Posterior cingulate gyrus (tissue), 11 donors: ENCODE measurements at regions of chr1 and their contacts with region 1.

Region 1: DNA sequence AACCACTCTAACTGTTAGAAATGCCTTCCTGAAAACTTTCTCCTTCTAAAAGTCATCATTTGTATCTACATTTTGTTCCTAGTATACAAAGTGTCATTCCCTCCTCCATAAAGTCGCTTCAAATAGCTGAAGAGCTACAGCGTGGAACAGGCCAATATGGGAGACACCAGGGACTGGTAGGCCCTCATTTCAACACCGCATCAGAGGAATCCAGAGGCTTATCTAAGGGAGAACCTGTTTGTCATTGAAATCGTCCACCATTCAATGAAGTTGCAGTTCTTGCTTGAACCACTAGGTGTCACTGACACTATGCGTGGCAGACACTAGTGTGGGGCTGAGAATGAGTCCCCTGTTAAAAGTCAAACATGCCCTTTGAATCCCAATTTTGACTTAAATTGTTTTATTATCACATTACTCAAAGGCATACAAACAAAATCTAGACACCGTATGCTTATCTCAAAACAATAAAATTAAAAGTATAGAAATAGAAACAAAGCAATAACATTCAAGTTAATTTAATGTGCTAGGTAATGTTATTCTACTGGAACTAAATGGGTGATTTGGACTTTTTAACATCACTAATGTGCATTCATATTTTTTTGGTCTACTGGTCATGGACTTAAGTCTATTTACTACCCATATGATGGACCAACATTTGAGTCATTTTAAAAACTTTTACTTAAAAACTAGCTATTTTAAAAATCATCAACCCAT is 182.3 kb downstream of the FCRL5 start:
- DNase-seq: peak in 4 of 10 donors; percentile 12 to 31 (median 20)

Region 2: DNA sequence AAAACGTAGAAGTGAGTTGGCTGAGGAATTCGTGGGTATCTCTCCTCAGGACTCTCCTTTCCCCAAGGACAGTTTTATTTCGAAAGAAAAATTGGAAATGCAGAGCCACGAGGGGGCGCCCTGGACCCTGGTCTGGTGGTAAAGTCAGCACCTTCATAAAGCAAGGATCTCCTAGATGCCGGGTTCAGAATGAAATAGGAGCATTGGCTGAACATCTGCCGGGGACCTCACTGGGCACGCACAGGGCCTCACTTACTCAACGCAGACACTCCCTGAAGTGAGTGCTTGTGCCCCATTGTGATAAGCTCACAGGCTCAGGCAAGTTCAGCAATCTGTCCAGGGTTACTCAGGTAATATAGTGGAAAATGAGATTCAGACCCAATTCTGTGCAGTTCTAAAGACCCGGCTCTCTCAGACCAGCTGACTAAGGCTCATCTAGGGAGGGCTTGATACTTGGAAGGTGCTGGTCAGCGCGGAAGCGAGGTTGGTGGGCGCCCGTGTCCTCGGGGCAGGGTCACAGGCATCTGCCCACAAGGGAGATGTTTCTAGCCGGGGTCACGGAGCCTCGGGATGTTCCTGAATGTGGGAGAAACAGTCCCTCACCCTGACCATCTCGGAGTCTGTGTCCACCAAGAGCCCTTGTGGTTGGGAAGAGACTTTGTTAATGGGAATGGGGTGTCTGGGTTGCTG is 176.1 kb before region 1 on chr1:
- intact Hi-C with region 1: loop called (anchors 10 kb)
- DNase-seq: peak in 9 of 10 donors; percentile 37 to 92 (median 68)

Region 3: GRCh38 chr1:157274698-157275534 is 95.0 kb before region 1 on chr1:
- intact Hi-C with region 1: no loop called
- DNase-seq: no peak

Region 4: DNA sequence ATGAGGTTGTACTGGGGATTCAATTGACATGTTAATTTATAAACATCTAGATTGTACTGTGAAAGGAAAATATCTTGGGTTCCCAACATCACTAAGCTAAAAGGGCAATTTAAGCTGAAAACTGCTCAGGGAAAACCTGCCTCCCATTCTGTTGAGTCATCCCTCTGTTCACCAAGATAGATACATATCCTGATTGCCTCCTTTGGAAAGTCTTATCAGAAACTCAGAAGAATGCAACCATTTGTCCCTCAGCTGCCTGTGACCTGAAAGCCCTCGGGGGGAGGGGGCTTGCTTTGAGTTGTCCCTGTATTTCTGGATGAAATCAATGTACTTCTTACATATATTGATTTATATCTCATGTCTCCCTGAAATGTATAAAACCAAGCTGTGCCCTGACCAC is 44.7 kb before region 1 on chr1:
- intact Hi-C with region 1: no loop called
- DNase-seq: no peak

Region 5: DNA sequence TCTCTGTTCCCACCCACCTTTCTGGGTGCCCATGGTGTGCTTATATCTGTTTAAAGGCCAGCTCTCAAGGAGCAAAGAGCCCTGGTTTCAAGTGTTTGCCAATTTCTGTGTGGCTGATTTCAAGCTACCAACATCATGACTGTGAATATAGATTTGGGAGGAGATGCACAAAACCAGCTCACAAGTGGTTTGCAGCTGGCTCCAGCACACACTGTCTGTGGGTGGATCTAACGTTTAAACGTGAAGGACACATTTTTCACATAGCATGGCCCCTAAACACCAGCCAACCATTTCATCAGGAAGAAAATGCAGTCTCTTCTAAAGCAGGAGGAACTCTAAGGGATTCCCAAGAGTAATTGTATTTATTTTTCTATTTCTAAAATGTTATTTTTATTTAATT is 117.1 kb after region 1 on chr1:
- intact Hi-C with region 1: loop called (anchors 2 kb)
- DNase-seq: no peak